A673 (cell line): ENCODE measurements at regions of chr17 and their contacts with region 1.

Region 1: DNA sequence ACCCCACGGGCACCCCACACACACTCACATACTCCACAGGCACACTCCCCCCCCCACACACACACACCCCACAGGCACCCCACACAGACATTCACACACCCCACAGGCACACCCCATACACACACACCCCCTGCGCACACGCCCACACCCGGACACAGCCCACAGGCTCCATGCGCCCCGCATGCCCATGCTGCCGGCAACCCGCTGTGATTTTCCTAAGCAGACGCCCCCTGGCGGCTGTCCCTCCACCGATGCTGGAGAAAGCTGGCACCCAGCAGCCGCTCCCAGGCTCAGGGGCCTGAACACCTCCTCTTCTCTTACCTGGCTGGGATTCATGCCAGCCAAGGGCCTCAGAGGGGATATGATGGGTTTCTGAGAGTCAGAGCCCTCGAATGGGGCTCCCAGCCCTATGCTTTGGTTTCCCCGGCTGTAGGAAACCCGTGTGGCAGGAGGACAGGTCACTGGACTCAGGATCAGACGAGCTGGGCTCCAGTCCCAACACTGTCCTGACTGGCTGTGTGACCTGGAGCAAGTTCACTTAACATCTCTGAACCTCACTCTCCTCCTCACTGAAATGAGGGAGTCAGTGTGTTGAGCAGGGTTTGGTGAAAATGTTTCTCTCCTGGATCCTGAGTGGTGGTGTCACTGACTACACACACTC is 19.6 kb upstream of the TNFRSF13B start:
- DNase-seq: peak; percentile 88
- H3K4me3 ChIP-seq: no peak overlapping the region
- H3K27ac ChIP-seq: no peak overlapping the region
- H3K4me1 ChIP-seq: peaks cover 16% of the 10 kb centered on the region
- H3K27me3 ChIP-seq: no peaks in the 10 kb centered on the region
- CTCF ChIP-seq: peak; percentile 96

Region 2: DNA sequence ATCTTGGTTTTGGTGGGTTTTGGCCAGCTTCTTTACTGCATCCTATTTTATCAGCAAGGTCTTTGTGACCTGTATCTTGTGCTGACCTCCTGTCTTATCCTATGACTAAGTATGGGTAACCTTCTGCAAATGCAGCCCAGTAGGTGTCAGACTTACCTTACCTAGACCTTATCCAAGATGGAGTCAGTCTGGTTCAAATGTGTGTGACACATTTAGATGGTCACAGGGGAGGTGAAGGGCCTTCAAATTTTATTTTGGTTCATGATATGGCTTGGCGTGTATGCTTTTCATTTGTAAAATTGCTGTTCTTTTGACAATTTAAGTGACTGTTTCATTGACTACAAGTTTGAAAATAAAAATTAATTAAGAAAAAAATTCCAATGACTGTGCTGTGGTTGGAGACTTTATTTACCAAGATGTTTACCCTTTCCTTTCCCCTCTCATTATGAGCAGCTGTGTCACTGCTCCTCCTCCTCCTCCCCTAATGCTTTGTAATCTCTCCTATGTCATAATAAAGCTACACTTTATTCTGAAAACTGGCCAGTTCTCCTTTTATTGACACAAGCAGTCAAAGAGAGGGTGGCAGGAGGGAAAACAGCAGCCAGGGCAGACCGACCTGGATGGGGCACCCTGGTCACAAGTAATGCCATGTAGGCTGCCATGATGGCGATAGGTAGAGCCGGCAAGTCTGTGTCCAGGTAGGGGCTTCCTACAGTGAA is 68.9 kb before region 1 on chr17:
- CTCF ChIA-PET with region 1: no interaction called
- POLR2A ChIA-PET with region 1: no interaction called
- intact Hi-C with region 1: loop called (anchors 2 kb)
- DNase-seq: no peak
- H3K4me3 ChIP-seq: no peak overlapping the region
- H3K27ac ChIP-seq: no peak overlapping the region
- H3K4me1 ChIP-seq: no peaks in the 10 kb centered on the region
- H3K27me3 ChIP-seq: no peaks in the 10 kb centered on the region
- CTCF ChIP-seq: no peak